Calu3 (cell line): ENCODE measurements at regions of chr7 and their contacts with region 1.

Region 1: GRCh38 chr7:100444311-100445278 is 8.3 kb upstream of the PPP1R35 start:
- DNase-seq: no peak
- H3K4me3 Mint-ChIP-seq: no peak overlapping the region
- H3K27ac Mint-ChIP-seq: no peak overlapping the region
- H3K4me1 Mint-ChIP-seq: no peaks in the 10 kb centered on the region
- H3K27me3 Mint-ChIP-seq: no peaks in the 10 kb centered on the region
- CTCF ChIP-seq: no peak

Region 2: GRCh38 chr7:99693427-99694200 is 751.0 kb before region 1 on chr7:
- CTCF ChIA-PET with region 1: no interaction called
- intact Hi-C with region 1: no loop called
- DNase-seq: peak; percentile 45
- H3K4me3 Mint-ChIP-seq: peak overlapping the region; percentile 9
- H3K27ac Mint-ChIP-seq: no peak overlapping the region
- H3K4me1 Mint-ChIP-seq: peaks cover 26% of the 10 kb centered on the region
- H3K27me3 Mint-ChIP-seq: no peaks in the 10 kb centered on the region
- CTCF ChIP-seq: no peak

Region 3: GRCh38 chr7:100469227-100470044 is 24.8 kb after region 1 on chr7:
- CTCF ChIA-PET with region 1: interaction called, 11 read pairs
- intact Hi-C with region 1: no loop called
- DNase-seq: peak; percentile 85
- H3K4me3 Mint-ChIP-seq: no peak overlapping the region
- H3K27ac Mint-ChIP-seq: no peak overlapping the region
- H3K4me1 Mint-ChIP-seq: no peaks in the 10 kb centered on the region
- H3K27me3 Mint-ChIP-seq: no peaks in the 10 kb centered on the region
- CTCF ChIP-seq: peak; percentile 80